Endothelial cell of umbilical vein (primary cell): ENCODE measurements at regions of chr4 and their contacts with region 1.

Region 1: DNA sequence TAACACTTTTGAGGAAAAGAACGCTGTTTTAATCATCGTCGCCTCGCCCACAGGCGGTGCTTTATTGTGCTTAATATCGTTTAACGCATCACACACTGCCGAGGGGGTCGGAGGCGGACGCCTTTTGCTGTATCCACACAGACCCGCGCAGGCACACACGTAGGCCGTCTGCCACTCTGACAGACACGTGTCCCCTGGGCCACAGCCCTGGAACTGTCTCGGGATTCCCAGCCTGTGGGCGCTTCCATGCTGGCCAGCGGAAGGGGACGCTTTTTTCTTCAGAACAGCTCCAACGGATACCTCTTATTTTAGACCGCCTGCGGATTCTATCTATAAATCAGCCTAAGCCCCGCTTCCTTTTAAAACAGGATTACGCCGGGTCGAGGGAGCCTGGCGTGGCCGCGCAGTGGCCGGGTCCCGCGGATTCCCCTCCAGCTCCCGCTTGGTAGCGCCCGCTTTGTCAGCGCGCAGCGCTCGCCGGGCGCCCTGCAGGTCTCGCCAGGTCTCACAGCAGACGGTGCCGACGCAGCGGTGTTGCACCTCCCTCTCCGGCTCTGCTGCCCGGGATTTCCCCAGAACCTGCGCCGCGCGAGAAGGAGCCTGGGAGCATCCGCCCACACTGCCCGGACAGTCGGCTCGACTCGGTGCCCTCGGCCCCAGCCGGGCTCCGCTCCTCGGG is at the start of gene NOCT:
- DNase-seq: peak; percentile 88
- H3K4me3 ChIP-seq: peak within 1 kb of the TSS; percentile 90 to 100 (median 99)
- H3K27ac ChIP-seq: peak within 1 kb of the TSS; percentile 100
- H3K4me1 ChIP-seq: peaks cover 35% of the 10 kb centered on the region
- H3K27me3 ChIP-seq: no peaks in the 10 kb centered on the region
- CTCF ChIP-seq: peak in 1 of 2 donors; percentile 29
- POLR2A ChIP-seq: peak; percentile 90
- total RNA-seq, gene NOCT: 20.1 and 20.7 TPM in 2 replicates

Region 2: DNA sequence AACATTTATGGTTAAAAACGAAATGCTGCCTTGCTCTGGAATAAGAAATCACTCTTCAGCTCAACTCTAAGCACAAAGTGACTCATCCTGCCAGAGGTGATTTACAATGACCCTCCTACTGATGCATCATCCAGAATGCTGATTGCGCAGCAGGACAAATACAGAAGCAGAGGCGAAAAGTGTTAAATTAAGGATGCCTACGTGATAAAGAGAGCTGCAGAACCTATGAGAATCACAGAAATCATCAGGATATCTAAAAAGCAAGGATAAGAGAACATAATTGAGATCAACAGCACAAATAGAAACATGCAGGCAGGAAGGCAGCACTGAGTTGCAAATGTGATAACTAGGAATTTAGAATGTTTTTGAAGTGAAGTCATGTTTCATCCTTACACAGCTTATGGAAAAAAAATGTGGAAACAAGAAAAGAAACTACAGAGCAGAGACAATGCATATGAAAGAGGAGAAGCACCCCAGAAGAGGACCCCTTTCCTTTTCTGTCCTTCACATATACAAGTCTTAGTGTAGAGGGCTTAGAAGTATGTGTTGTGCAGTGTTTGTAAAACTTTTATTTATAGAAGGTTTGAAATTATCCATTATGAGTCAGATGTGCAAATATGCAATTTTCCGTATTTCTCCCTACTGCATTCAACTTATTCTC is 961.6 kb before region 1 on chr4:
- CTCF ChIA-PET with region 1: no interaction called
- POLR2A ChIA-PET with region 1: no interaction called
- dilution Hi-C with region 1: no loop called
- intact Hi-C with region 1: loop called (anchors 1 kb)
- DNase-seq: peak; percentile 93
- H3K4me3 ChIP-seq: peak overlapping the region in 1 of 3 experiments; percentile 6
- H3K27ac ChIP-seq: peak overlapping the region; percentile 92
- H3K4me1 ChIP-seq: peaks cover 63% of the 10 kb centered on the region
- H3K27me3 ChIP-seq: no peaks in the 10 kb centered on the region
- CTCF ChIP-seq: no peak
- POLR2A ChIP-seq: peak; percentile 64

Region 3: DNA sequence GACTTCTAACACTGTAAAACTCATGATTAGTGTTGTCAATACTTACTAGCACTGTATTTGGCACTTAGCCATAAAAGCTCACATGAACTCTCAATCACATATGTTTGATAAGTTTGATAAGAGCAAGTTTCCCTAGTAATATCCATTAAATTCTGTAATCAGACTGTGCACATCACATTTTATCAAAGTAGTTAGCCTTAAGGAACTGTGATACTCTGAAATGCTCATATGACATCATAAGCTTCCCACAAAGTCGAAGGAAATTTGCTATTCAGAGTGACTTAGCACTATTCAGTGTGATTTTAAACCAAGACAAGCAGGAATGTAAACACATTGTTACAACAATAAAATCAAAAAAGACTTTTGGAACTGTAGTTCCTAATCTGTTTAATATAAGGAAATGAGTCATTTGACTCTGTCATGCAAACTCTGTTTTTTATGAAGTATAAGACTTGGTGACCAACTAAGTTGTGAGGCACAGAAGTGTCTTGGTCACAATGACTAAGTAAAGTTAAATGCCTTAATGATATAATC is 779.9 kb before region 1 on chr4:
- CTCF ChIA-PET with region 1: no interaction called
- POLR2A ChIA-PET with region 1: no interaction called
- dilution Hi-C with region 1: no loop called
- intact Hi-C with region 1: loop called (anchors 2 kb)
- DNase-seq: peak; percentile 96
- H3K4me3 ChIP-seq: no peak overlapping the region
- H3K27ac ChIP-seq: peak overlapping the region; percentile 89
- H3K4me1 ChIP-seq: peaks cover 50% of the 10 kb centered on the region
- H3K27me3 ChIP-seq: no peaks in the 10 kb centered on the region
- CTCF ChIP-seq: no peak
- POLR2A ChIP-seq: peak; percentile 44

Region 4: GRCh38 chr4:138938366-138938690 is 77.1 kb before region 1 on chr4:
- CTCF ChIA-PET with region 1: interaction called, 7 read pairs
- POLR2A ChIA-PET with region 1: no interaction called
- dilution Hi-C with region 1: no loop called
- intact Hi-C with region 1: loop called (anchors 2 kb)
- DNase-seq: peak; percentile 59
- H3K4me3 ChIP-seq: no peak overlapping the region
- H3K27ac ChIP-seq: no peak overlapping the region
- H3K4me1 ChIP-seq: no peaks in the 10 kb centered on the region
- H3K27me3 ChIP-seq: no peaks in the 10 kb centered on the region
- CTCF ChIP-seq: peak in 1 of 2 donors; percentile 28
- POLR2A ChIP-seq: no peak

Region 5: DNA sequence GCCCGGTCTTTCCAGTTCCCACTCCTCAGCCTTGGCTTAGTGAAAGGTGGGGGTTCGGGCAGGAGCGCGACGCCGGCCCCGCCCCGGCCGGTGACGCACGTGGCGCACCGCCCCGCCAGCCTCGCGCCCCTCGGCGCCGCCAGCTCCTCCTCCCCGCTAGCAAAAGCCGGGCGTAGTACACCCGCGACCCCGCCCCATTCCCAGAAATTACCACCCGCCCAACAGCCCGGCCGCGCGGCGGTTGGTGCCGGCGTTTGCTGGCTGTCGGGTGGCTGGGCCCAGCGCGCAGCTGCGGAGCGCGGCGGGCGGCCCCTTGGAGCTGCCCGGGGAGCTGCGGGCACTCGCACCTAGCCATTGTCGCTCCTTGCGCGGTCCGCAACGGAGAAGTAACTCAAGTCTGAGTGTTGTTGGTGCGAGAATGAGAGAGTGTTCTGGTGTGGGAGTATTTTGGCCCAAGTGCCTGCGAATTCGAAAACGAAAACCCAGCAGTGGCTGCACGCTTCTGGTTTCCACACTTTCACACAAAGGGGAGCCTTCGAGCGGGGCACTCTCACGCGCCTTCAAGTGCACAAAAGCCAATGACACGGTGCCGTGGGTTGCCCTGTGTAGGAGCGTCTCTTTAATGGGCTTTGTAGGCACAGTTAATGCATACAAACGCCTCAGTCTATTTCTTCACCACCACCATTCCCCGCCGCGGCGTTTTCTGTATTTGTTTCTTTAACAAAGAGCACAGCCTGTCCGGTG is 162.6 kb after region 1 on chr4:
- CTCF ChIA-PET with region 1: no interaction called
- POLR2A ChIA-PET with region 1: interaction called, 5 read pairs
- dilution Hi-C with region 1: no loop called
- intact Hi-C with region 1: loop called (anchors 2 kb)
- DNase-seq: peak; percentile 96
- H3K4me3 ChIP-seq: peak overlapping the region; percentile 83 to 93 (median 84)
- H3K27ac ChIP-seq: peak overlapping the region; percentile 75
- H3K4me1 ChIP-seq: peaks cover 7% of the 10 kb centered on the region
- H3K27me3 ChIP-seq: no peaks in the 10 kb centered on the region
- CTCF ChIP-seq: no peak
- POLR2A ChIP-seq: peak; percentile 75